ENCODE measurements at regions of chr12 and their contacts with region 1.

Region 1: DNA sequence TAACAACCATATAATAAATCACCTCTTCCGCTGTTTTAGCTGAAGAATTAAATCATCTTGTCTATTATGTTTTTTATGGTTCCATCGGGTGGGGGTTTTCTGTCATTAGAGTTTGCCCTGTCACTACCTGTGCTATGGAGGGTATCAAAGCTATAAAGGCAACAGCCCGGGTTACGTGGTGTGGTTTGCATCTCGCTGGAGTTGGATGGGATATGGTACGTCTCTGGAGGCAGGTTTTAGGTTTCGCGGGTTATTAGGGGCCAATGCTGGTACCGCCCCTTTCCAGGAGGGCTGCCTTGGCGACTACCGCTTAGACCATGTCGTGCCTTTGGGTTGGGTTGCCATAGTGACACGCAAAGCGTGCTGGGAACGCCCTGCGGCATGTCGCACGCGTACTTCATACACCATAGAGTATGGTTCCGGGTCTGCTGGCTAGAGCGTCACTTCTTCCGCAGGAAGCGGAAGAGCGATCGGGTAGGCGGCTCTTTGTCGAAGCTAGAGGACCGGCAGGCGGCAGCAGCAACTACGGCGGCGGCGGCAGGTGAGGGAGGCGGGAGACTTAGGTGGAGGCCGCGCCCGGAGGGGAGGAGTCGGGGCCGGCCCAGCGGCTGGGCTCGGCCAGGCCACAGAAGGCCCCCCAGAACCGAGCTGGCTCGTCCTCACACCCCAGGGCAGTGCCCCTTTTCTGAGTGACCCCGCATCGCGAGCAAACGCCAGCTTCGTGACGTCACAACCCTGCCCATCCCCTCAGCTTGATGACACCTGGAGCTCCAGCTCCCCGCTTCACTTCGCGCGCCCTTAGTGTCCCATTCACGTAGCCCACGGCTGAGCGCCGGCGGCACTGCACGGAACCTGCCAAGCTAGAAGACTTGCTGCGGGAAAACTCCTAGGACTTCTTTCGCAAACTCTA is at the start of gene ZC3H10:
- DNase-seq: peak; percentile 99
- H3K4me3 ChIP-seq: peak within 1 kb of the TSS; percentile 98
- H3K27ac ChIP-seq: peak within 1 kb of the TSS; percentile 96
- H3K4me1 ChIP-seq: peaks cover 26% of the 10 kb centered on the region
- H3K27me3 ChIP-seq: no peaks in the 10 kb centered on the region
- CTCF ChIP-seq: peak; percentile 29; the same call in 1 of the 2 replicates
- total RNA-seq, gene ZC3H10: 4.4 and 6.5 TPM in 2 replicates

Region 2: DNA sequence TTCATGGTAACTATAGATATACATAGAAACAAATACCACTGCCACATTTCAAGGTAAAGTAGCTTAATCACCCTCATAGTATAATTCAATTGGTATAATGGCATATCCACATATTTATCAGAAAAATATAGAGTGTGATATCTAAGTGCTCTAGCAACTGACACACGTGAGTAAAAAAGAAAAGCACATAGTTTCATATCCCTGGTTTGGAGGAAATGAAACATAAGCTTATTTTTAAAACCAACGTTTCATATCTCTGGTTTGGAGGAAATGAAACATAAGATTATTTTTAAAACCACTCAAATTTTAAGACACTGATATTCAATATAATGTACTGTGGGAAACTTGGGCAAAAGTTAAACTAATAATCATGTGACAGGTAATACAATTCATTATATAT is 650.2 kb before region 1 on chr12:
- CTCF ChIA-PET with region 1: no interaction called
- POLR2A ChIA-PET with region 1: no interaction called
- intact Hi-C with region 1: no loop called
- DNase-seq: no peak
- H3K4me3 ChIP-seq: no peak overlapping the region
- H3K27ac ChIP-seq: no peak overlapping the region
- H3K4me1 ChIP-seq: no peaks in the 10 kb centered on the region
- H3K27me3 ChIP-seq: no peaks in the 10 kb centered on the region
- CTCF ChIP-seq: no peak

Region 3: DNA sequence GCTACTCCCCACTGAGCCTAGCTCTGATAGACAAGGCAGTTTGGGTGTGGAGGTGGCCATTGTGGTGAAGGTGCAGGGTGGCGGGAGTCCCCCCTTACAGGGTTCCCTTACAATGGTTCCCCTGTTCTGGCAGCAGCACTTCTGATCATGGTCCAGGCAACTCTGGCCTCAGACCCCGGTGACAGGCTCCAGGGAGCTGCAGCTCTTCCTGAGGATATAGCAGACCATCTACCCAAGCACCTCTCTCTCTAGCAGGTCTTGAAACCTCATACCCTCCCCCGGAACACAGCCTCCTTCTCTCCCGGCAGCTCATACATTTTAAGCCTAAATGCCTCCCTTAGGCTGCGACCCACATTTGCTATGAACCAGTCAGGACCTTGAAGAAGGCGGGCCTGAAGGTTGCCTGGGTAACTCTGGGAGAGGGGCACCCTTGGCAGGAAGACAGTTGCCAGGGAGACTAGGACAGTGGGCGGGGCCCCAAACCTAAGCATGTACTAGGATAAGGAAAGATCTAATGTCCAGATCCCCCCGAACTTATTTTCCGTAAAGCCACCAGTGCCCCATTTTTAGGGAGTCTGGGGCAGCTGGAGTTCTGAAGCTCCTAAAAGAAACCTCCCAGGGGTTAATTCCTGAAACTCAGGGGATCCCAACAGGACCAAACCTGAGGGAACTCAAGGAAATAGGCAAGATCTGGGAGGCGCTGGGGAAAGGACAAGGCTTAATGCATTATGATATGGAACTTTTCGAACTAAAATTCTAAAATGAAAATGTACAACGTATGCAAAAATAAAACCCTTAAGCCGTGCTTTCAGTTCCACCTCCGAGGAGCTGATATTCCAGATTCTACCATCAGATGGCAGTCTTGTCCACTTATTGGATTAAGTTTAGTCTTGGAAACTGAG is 379.7 kb before region 1 on chr12:
- CTCF ChIA-PET with region 1: interaction called, 5 read pairs
- POLR2A ChIA-PET with region 1: no interaction called
- intact Hi-C with region 1: loop called (anchors 2 kb)
- DNase-seq: peak; percentile 68 to 71
- H3K4me3 ChIP-seq: peak overlapping the region; percentile 74
- H3K27ac ChIP-seq: no peak overlapping the region
- H3K4me1 ChIP-seq: peaks cover 12% of the 10 kb centered on the region
- H3K27me3 ChIP-seq: no peaks in the 10 kb centered on the region
- CTCF ChIP-seq: peak; percentile 90

Region 4: DNA sequence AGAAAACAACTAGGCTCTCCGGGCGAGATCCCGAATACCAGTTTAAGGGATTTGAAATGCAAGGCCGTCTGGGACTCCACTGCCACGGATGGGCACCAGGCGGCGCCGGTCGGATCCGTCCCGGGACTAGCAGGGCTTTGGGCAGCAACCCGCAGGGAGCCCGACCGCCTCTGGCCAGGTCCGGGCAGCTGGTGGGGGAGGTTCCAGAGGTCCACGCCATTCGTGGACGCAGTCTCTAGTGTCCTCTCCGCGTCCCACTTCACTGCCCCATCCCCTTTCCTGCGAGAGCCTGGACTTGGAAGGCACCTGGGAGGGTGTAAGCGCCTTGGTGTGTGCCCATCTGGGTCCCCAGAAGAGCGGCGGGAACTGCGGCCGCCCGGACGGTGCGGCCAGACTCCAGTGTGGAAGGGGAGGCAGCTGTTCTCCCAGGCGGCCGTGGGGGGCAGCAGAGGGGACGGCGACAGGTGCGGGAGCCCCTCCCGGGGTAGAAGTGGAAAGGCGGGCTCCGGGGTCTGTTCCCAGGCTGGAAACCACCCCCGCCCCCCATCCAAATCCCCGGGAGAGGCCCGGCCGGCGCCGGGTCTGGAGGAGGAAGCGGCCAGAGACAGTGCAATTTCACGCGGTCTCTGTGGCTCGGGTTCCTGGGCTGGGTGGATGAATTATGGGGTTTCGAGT is 38.9 kb before region 1 on chr12:
- CTCF ChIA-PET with region 1: no interaction called
- POLR2A ChIA-PET with region 1: no interaction called
- intact Hi-C with region 1: loop called (anchors 1 kb)
- DNase-seq: peak; percentile 74 to 91
- H3K4me3 ChIP-seq: peak overlapping the region; percentile 69
- H3K27ac ChIP-seq: peak overlapping the region; percentile 86
- H3K4me1 ChIP-seq: peaks cover 26% of the 10 kb centered on the region
- H3K27me3 ChIP-seq: no peaks in the 10 kb centered on the region
- CTCF ChIP-seq: peak; percentile 74

Region 5: GRCh38 chr12:56189176-56189917 is 71.3 kb after region 1 on chr12 and contains the start of gene SMARCC2:
- CTCF ChIA-PET with region 1: interaction called, 6 read pairs
- POLR2A ChIA-PET with region 1: interaction called, 9 read pairs
- intact Hi-C with region 1: loop called (anchors 2 kb)
- DNase-seq: peak; percentile 71 to 91
- H3K4me3 ChIP-seq: peak within 1 kb of the TSS; percentile 99
- H3K27ac ChIP-seq: peak within 1 kb of the TSS; percentile 85
- H3K4me1 ChIP-seq: peaks cover 28% of the 10 kb centered on the region
- H3K27me3 ChIP-seq: no peaks in the 10 kb centered on the region
- CTCF ChIP-seq: peak; percentile 68
- total RNA-seq, gene SMARCC2: 70.3 and 86.4 TPM in 2 replicates

Region 6: DNA sequence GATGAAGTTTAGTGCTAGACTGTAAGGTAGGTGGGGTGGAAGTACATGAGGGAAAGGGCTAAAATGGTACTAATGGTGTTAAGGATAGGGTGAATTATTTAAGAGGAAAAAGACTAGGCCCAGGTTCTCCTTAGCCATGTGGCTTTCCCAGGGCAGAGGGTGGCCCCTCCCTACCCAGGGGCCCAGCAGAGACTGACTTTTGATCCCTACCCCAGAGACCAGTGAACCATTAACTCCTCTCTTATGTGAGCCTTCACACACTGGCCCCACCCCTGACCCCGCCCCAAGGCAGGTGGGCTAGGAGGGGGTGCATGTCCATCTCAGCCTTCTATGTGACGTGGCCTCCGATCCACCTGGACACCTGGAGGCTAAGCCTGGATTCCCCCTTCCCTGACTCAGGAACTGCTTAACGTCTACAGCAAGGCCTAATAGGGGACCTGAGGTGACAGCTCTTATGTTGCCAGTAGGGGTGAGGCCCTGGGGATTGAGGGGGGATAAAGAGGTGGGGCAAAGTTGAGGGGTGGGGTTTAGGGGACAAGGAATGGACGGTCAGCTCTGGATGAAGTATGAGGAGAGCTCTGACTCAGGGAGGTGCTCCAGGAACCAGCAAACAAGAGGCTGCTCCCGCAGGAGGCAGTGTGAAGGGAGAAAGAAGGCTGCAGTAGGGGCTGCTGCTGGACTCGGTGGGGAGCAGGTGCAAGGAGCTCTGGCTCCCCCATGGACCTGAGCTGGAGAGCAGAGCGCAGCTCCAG is 112.6 kb after region 1 on chr12:
- CTCF ChIA-PET with region 1: no interaction called
- POLR2A ChIA-PET with region 1: no interaction called
- intact Hi-C with region 1: no loop called
- DNase-seq: no peak
- H3K4me3 ChIP-seq: no peak overlapping the region
- H3K27ac ChIP-seq: no peak overlapping the region
- H3K4me1 ChIP-seq: no peaks in the 10 kb centered on the region
- H3K27me3 ChIP-seq: no peaks in the 10 kb centered on the region
- CTCF ChIP-seq: no peak

Region 7: GRCh38 chr12:56286044-56286830 is 168.2 kb after region 1 on chr12:
- CTCF ChIA-PET with region 1: interaction called, 15 read pairs
- POLR2A ChIA-PET with region 1: no interaction called
- intact Hi-C with region 1: no loop called
- DNase-seq: no peak
- H3K4me3 ChIP-seq: no peak overlapping the region
- H3K27ac ChIP-seq: no peak overlapping the region
- H3K4me1 ChIP-seq: peaks cover 12% of the 10 kb centered on the region
- H3K27me3 ChIP-seq: no peaks in the 10 kb centered on the region
- CTCF ChIP-seq: no peak

Region 8: DNA sequence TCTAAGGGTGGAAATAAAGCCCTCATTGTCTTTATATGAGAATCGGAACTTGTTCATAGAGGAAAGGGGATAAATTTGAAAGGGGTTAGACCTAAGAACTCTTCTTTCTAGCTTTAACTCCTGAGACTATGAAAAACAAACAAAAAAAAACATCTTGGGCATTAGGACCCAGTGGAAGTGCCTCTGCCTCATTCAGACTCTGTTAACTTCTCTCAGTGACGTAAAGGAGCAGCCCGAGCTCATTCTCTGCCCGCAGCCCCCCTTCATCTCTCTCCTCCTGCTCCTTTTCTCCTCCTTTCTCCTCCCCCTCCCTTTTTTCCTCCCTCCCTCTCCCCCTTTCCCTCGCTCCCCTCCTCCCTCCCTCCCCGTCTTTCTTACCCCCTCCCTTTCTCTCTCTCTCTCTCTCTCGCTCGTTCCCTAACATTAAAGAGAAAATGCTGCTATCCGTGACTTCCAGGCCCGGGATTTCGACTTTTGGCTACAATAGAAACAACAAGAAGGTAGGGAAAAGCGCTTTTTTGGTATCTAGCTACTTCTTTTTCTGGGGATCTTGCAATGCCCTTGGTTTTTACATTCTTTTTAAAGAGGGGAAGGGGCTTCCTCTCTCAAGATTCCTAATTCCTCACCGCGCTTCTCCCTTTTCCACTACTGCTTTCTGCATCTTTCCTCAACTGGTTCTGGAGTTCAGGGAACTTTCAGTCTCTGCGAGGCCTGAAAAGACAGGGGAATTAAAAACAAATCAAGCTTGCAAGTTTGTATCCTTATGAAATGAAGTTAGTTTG is 403.7 kb after region 1 on chr12 and contains the start of gene RBMS2:
- CTCF ChIA-PET with region 1: no interaction called
- POLR2A ChIA-PET with region 1: interaction called, 16 read pairs
- intact Hi-C with region 1: no loop called
- DNase-seq: peak; percentile 76 to 82
- H3K4me3 ChIP-seq: peak within 1 kb of the TSS; percentile 80
- H3K27ac ChIP-seq: peak within 1 kb of the TSS; percentile 95
- H3K4me1 ChIP-seq: peaks cover 76% of the 10 kb centered on the region
- H3K27me3 ChIP-seq: no peaks in the 10 kb centered on the region
- CTCF ChIP-seq: no peak
- total RNA-seq, gene RBMS2: 44.7 and 81.8 TPM in 2 replicates

Region 9: DNA sequence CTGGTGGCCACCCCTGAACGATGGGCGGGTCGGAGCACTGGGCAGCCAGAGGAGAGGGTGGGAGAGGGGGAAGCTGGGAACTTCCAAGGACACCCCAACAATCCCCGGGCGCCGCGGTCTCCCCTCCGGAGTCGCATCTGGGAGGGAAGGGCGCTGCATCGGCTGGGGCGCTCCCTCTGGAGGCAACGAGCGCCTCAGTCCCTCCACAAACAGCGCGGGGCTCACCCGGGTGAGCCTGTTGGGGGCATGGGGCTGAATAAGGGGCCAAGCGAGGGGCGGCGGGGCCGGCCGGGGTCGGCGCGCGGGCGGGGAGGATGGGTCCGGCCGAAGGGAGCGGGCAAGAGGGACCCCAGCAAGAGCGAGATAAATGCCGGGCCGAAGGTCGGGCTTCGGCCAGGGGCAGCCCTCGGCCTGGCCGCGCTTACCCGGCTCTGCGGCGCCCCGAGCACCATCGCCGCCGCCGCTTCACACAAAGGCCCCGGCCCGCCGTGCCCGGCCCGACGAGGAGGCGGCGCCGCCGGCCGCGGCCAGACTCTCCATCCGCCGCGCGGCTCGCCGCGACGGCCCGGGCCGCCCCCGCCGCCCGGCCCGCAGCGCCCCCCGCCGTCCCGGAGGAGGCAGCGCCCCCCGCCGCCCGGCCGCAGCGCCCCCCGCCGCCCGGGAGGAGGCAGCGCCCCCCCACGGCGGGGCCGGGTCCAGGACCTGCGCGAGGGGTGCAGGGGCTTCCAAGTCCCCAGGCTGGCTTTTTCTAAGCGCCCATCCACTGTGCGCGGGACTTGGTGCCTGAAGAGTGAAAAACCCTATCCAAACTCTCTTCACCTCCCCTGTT is 888.2 kb after region 1 on chr12 and contains the start of gene ZBTB39:
- CTCF ChIA-PET with region 1: no interaction called
- POLR2A ChIA-PET with region 1: no interaction called
- intact Hi-C with region 1: loop called (anchors 5 kb)
- DNase-seq: peak in 1 of 2 experiments; percentile 70
- H3K4me3 ChIP-seq: peak within 1 kb of the TSS; percentile 62
- H3K27ac ChIP-seq: no peak within 1 kb of the TSS
- H3K4me1 ChIP-seq: peaks cover 11% of the 10 kb centered on the region
- H3K27me3 ChIP-seq: no peaks in the 10 kb centered on the region
- CTCF ChIP-seq: peak; percentile 68; the same call in 1 of the 2 replicates
- total RNA-seq, gene ZBTB39: 6.5 and 7.6 TPM in 2 replicates